Naive thymus-derived CD4-positive, alpha-beta T cell (primary cell): ENCODE measurements at regions of chr14 and their contacts with region 1.

Region 1: DNA sequence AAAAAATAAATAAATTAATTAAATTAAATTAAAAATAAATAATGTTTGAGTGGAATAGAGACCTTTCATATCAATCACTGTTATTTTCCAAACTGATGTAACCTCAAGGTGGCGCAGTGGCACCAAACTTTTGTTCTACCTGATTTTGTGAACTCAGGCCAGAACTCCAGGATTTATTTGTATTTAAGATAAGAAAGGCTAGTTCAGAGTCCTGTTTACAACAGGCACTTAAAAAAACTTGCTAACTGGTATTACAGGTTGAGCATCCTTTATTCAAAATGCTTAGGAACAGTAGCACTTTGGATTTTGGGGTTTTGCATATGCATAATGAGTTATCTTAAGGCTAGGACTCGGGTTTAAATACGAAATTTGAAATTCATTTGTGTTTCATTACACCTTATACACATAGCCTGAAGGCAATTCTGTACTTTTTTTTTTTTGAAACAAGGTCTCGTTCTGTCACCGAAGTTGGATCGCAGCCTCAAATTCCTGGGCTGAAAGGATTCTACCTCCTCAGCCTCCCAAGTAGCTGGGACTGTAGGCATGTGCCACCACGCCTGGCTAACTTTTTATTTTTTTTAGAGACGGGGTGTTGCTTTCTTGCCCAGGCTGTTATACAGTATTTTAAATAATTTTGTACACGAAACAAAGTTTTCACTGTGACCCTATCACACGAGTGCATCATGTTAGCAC is 32.4 kb downstream of the YY1 start:
- DNase-seq: peak in 2 of 9 donors; percentile 22
- ATAC-seq: peak; percentile 32
- H3K4me3 ChIP-seq: no peak overlapping the region
- H3K4me3 Mint-ChIP-seq: no peak overlapping the region
- H3K27ac ChIP-seq: no peak overlapping the region
- H3K27ac Mint-ChIP-seq: peak overlapping the region in 1 of 9 donors; percentile 59
- H3K4me1 ChIP-seq: peaks cover 21 to 34% of the 10 kb centered on the region in 2 donors
- H3K4me1 Mint-ChIP-seq: peaks cover 28 to 81% (median 70%) of the 10 kb centered on the region in 7 donors
- H3K27me3 ChIP-seq: no peaks in the 10 kb centered on the region
- H3K27me3 Mint-ChIP-seq: no peaks in the 10 kb centered on the region

Region 2: DNA sequence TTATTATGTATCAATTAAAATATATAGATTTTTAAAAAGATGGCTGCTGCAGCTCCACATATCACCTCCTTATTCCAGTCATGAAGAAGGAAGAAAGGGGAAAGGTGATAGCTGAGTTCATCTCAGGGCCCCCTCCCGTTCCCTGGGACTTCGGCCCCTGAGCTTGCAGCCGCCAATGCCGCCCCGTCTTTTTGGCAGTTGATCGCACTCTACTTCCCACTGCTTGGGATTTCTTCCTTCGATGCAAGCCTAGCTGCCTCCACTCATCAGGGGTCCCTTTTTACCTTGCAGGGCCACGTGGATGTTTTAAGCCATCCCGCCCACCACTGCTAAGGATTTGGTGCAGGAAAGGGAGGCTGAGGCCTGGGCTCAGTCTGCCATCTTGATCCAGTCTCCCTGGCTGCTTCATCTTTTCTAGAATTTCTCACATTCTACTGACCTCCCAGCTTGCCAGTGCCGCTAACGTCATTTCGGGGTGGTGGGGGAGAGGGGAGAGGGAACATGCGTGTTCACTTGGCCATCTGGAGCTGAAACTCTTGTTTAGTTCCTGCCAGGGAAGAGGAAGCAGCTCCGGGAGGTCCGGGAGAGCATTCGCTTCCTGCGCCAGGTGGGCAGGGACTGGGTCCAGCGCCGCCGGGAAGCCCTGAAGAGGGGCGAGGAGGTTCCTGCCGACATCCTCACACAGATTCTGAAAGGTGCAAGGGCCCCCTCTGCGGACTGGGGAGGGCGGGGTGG is 556.0 kb before region 1 on chr14:
- CTCF ChIA-PET with region 1: no interaction called
- POLR2A ChIA-PET with region 1: no interaction called
- intact Hi-C with region 1: no loop called
- DNase-seq: no peak
- ATAC-seq: no peak
- H3K4me3 ChIP-seq: no peak overlapping the region
- H3K4me3 Mint-ChIP-seq: no peak overlapping the region
- H3K27ac ChIP-seq: no peak overlapping the region
- H3K27ac Mint-ChIP-seq: no peak overlapping the region
- H3K4me1 ChIP-seq: no peaks in the 10 kb centered on the region
- H3K4me1 Mint-ChIP-seq: no peaks in the 10 kb centered on the region
- H3K27me3 ChIP-seq: no peaks in the 10 kb centered on the region
- H3K27me3 Mint-ChIP-seq: peaks cover 0 to 21% (median 9%) of the 10 kb centered on the region in 5 donors

Region 3: DNA sequence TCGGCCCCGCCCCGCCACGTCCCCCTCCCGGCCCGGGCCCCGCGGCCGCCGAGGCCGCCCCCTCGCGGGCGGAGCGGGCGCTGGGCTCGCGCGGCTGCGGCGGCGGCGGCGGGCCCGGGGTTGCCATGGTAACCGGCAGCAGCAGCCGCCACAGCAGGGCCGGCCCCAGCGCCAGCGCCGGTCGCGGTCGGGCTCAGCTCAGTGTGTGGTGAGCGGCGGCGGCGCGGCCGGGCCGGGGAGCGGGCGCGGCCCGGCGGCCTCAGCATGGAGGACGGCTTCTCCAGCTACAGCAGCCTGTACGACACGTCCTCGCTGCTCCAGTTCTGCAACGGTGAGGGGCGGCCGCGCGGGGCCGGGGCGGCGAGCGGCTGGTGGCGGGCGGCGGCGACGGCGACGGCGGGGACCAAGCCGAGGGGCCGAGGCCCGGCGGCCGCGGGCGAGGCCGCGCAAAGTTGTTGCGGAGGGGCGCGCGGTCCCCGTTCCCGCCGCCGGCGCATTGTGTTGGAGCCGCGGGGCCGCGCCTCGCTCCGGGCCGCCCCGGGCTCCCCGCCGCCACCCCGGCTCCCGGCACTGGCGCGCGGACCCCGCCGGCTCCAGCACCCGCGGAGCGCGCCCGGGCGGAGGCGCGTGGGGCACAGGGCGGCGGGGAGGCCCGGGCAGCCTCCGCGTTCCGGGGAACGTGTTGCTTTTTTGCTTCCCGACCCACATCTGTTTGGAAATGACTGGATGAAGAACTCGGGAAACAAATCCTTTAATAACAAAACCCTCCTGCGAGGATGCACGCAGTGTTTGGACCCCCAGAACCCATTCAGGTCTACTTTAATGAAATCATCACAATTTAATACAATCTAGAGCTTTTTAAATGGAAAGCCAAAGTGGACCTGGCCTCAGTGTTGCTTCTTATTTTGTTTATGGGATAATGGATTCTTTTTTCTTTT is 477.9 kb before region 1 on chr14 and contains the start of gene EML1:
- CTCF ChIA-PET with region 1: no interaction called
- POLR2A ChIA-PET with region 1: no interaction called
- intact Hi-C with region 1: no loop called
- DNase-seq: peak; percentile 55 to 84 (median 72)
- ATAC-seq: peak; percentile 88
- H3K4me3 ChIP-seq: peak within 1 kb of the TSS; percentile 38
- H3K4me3 Mint-ChIP-seq: peak within 1 kb of the TSS; percentile 69 to 85 (median 79)
- H3K27ac ChIP-seq: no peak within 1 kb of the TSS
- H3K27ac Mint-ChIP-seq: peak within 1 kb of the TSS in 7 of 9 donors; percentile 12 to 69 (median 48)
- H3K4me1 ChIP-seq: peaks cover 0 to 4% of the 10 kb centered on the region in 2 donors
- H3K4me1 Mint-ChIP-seq: peaks cover 5 to 34% (median 21%) of the 10 kb centered on the region in 7 donors
- H3K27me3 ChIP-seq: peaks cover 0 to 5% of the 10 kb centered on the region in 2 donors
- H3K27me3 Mint-ChIP-seq: peaks cover 0 to 66% (median 27%) of the 10 kb centered on the region in 5 donors
- total RNA-seq, gene EML1: not detected

Region 4: GRCh38 chr14:99853206-99853605 is 418.2 kb before region 1 on chr14:
- CTCF ChIA-PET with region 1: no interaction called
- POLR2A ChIA-PET with region 1: no interaction called
- intact Hi-C with region 1: no loop called
- DNase-seq: no peak
- ATAC-seq: no peak
- H3K4me3 ChIP-seq: no peak overlapping the region
- H3K4me3 Mint-ChIP-seq: no peak overlapping the region
- H3K27ac ChIP-seq: no peak overlapping the region
- H3K27ac Mint-ChIP-seq: no peak overlapping the region
- H3K4me1 ChIP-seq: no peaks in the 10 kb centered on the region
- H3K4me1 Mint-ChIP-seq: no peaks in the 10 kb centered on the region
- H3K27me3 ChIP-seq: no peaks in the 10 kb centered on the region
- H3K27me3 Mint-ChIP-seq: peaks cover 23 to 38% (median 28%) of the 10 kb centered on the region in 5 donors

Region 5: DNA sequence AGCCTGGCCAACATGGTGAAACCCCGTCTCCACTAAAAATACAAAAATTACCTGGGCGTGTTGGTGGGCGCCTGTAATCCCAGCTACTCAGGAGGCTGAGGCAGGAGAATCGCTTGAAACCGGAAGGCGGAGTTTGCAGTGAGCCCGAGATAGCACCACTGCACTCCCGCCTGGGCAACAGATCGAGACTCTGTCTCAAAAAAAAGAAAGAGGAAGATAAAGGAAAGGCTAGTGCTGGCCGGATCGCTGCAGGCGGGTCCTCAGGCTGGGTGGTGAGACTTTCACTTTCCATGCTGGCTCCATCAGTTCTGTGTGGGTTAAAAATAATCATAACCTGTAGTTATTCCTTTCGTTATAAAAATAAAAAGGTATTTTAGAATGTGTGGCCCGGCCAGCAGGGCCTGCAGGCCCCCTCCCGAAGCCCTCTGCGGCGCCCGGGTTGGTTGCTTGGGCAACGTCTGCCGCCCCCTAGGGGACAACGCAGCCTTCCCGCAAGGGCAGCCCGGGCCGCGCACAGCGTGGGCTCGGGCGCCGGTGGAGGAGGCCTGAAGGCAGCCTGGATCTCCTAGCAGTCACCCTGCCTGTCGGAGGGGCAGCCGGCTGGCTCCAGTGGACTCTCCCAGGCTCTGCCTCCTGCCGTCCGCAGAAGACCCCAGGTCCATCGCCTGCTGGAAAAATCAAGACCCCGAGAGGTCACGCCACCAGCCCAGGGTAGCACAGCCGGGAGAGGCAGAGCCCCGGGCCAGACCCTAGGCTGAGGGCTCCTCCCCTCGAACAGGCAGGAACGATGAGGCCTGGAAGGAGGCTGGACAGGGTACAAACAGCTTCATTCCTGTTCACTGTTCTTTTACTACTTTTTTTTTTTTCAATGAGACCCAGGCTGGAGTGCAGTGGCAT is 46.8 kb after region 1 on chr14:
- CTCF ChIA-PET with region 1: no interaction called
- POLR2A ChIA-PET with region 1: interaction called, 3 read pairs
- intact Hi-C with region 1: loop called in 1 of 2 experiments (anchors 1 kb)
- DNase-seq: peak; percentile 38 to 72 (median 58)
- ATAC-seq: peak; percentile 97
- H3K4me3 ChIP-seq: peak overlapping the region; percentile 53
- H3K4me3 Mint-ChIP-seq: peak overlapping the region; percentile 45 to 79 (median 72)
- H3K27ac ChIP-seq: no peak overlapping the region
- H3K27ac Mint-ChIP-seq: peak overlapping the region in 1 of 9 donors; percentile 9
- H3K4me1 ChIP-seq: no peaks in the 10 kb centered on the region
- H3K4me1 Mint-ChIP-seq: peaks cover 4 to 7% (median 5%) of the 10 kb centered on the region in 7 donors
- H3K27me3 ChIP-seq: no peaks in the 10 kb centered on the region
- H3K27me3 Mint-ChIP-seq: peaks cover 0 to 5% (median 0%) of the 10 kb centered on the region in 5 donors